K562 (cell line): ENCODE measurements at regions of chr10 and their contacts with region 1.

Region 1: DNA sequence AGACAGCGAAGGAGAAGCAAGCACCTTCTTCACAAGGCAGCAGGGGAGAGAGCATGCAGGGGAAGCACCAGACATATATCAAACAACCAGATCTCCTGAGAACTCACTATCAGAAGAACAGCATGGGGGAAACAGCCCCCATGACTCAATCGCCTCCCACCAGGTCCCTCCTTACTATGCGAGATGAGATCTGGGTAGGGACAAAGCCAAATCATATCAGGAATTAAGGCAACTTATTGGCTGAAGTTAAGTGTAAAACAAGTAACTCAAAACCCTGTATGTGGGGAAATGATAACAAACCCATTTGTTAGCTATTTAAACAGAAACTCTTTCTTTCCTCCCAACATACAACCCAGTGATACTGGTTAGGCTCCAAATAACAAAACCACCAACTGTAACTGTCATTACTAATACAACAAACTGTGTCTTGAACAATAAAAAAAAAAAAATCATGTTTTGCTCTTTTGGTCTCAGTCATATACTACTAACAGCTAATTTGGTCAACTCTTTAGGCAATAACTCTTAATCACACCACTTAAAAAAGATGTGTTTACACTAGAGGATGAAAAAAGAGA is 57.8 kb downstream of the MINDY3 start:
- DNase-seq: peak; percentile 32 to 89 (median 38)
- ATAC-seq: peak; percentile 68
- H3K4me3 ChIP-seq: no peak overlapping the region
- H3K27ac ChIP-seq: peak overlapping the region; percentile 77
- H3K4me1 ChIP-seq: peaks cover 0 to 44% of the 10 kb centered on the region in 2 experiments; a peak in 3 of 5 replicates
- H3K27me3 ChIP-seq: no peaks in the 10 kb centered on the region
- CTCF ChIP-seq: no peak
- EP300 ChIP-seq: peak; percentile 83
- POLR2A ChIP-seq: no peak
- RAD21 ChIP-seq: no peak

Region 2: DNA sequence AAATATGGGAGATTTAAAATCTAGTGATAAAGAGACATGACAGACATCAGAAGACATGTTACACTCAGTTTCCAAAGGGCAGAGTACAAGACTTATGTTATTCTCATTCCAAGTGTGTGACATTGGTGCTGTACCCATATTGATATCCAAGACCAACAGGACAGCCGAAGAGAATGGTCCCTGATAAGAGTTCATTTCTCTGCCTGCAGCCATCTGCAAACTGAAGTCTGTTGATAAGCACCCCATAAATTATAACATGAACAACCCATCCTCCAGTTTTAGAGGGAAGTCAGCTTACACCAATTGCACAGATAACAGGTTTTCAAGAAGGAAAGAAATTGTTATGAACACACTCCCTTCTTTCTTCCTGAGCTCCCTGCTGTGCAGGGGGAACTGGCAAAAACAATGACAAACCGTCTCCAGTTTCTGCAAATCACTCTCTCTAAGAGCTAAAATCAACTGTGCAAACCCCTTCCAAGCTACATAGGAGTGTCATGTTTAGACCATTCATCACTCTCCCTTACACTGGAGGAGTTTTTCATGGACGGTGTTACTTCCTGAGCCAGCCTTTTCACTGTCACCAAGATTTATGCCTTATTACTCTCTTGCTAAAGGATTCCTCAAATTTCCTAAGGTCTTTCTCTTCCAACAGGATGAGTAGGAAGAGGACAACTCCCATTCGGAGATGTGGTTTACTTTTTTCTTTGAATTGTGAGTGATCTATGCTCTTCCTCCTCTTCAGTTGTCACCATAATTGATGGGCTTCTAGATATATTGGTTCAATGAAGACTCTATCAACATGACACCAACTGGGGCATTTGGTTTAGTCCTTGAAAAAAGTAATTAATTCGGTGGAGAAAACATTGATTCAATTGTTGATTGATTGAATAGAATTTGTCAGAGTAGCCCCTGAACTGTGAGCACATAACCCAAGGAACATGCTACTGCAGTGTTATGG is 351.0 kb before region 1 on chr10:
- CTCF ChIA-PET with region 1: no interaction called
- POLR2A ChIA-PET with region 1: no interaction called
- in situ Hi-C with region 1: no loop called
- intact Hi-C with region 1: loop called (anchors 5 kb)
- DNase-seq: peak; percentile 82 to 95 (median 88)
- ATAC-seq: peak; percentile 91
- H3K4me3 ChIP-seq: no peak overlapping the region
- H3K27ac ChIP-seq: peak overlapping the region; percentile 87
- H3K4me1 ChIP-seq: peaks cover 18 to 62% of the 10 kb centered on the region in 2 experiments
- H3K27me3 ChIP-seq: no peaks in the 10 kb centered on the region
- CTCF ChIP-seq: no peak; a peak in 1 of 6 replicates
- EP300 ChIP-seq: peak; percentile 97
- POLR2A ChIP-seq: no peak
- RAD21 ChIP-seq: peak in 1 of 2 experiments; percentile 37; a peak in 2 of 4 replicates

Region 3: GRCh38 chr10:15738270-15738925 is 64.1 kb before region 1 on chr10:
- CTCF ChIA-PET with region 1: no interaction called
- POLR2A ChIA-PET with region 1: no interaction called
- in situ Hi-C with region 1: no loop called
- intact Hi-C with region 1: no loop called
- DNase-seq: no peak
- ATAC-seq: no peak
- H3K4me3 ChIP-seq: no peak overlapping the region
- H3K27ac ChIP-seq: no peak overlapping the region
- H3K4me1 ChIP-seq: no peaks in the 10 kb centered on the region
- H3K27me3 ChIP-seq: peaks cover 2 to 10% of the 10 kb centered on the region in 2 experiments; a peak in 3 of 5 replicates
- CTCF ChIP-seq: no peak
- EP300 ChIP-seq: no peak
- POLR2A ChIP-seq: no peak
- RAD21 ChIP-seq: no peak